ENCODE measurements at regions of chr10 and their contacts with region 1.

Region 1: DNA sequence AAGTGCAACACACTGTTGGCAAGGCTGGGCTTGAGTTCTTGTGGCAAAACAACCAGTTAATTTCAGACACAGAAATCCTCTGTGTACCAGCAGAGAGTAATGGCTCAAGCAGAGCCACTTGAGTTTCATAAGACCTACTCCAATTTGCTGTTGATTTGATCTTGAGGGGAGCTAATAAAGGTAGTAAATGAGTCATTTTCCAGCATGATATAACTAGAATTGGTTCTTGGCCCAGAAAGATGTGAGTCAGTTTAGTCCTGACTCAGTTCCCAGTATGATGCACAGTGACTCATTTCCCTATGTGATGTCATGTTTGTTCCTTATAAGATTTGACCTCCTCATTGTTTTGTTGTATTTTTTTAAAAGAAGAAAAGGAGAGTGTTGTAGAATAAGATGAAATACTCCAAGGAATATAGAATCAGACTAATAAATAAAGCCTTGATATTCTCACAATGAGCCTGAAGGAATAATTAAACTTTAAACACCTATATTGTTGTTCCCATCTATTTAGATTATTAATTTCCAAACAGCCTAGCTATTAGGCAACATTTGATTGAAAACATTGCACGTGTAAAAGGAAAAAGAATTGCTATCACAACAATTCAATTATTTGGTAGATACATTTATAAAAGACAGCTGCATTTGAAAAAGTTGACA is 186.2 kb downstream of the REEP3 start:
- DNase-seq: peak; percentile 58
- H3K4me3 Mint-ChIP-seq: no peak overlapping the region
- H3K27ac Mint-ChIP-seq: peak overlapping the region; percentile 27
- H3K4me1 Mint-ChIP-seq: peaks cover 17% of the 10 kb centered on the region
- H3K27me3 Mint-ChIP-seq: no peaks in the 10 kb centered on the region

Region 2: GRCh38 chr10:61903221-61903927 is 1804.0 kb before region 1 on chr10:
- CTCF ChIA-PET with region 1: no interaction called
- intact Hi-C with region 1: loop called (anchors 10 kb)
- DNase-seq: peak; percentile 74
- H3K4me3 Mint-ChIP-seq: peak overlapping the region; percentile 99
- H3K27ac Mint-ChIP-seq: peak overlapping the region; percentile 100
- H3K4me1 Mint-ChIP-seq: peaks cover 42% of the 10 kb centered on the region
- H3K27me3 Mint-ChIP-seq: no peaks in the 10 kb centered on the region

Region 3: GRCh38 chr10:62637249-62638061 is 1069.9 kb before region 1 on chr10:
- CTCF ChIA-PET with region 1: no interaction called
- intact Hi-C with region 1: loop called (anchors 1 kb)
- DNase-seq: peak; percentile 81
- H3K4me3 Mint-ChIP-seq: no peak overlapping the region
- H3K27ac Mint-ChIP-seq: no peak overlapping the region
- H3K4me1 Mint-ChIP-seq: peaks cover 14% of the 10 kb centered on the region
- H3K27me3 Mint-ChIP-seq: no peaks in the 10 kb centered on the region

Region 4: GRCh38 chr10:62980687-62981086 is 726.7 kb before region 1 on chr10:
- CTCF ChIA-PET with region 1: no interaction called
- intact Hi-C with region 1: loop called (anchors 5 kb)
- DNase-seq: peak; percentile 52
- H3K4me3 Mint-ChIP-seq: no peak overlapping the region
- H3K27ac Mint-ChIP-seq: peak overlapping the region; percentile 76
- H3K4me1 Mint-ChIP-seq: peaks cover 23% of the 10 kb centered on the region
- H3K27me3 Mint-ChIP-seq: peaks cover 8% of the 10 kb centered on the region

Region 5: DNA sequence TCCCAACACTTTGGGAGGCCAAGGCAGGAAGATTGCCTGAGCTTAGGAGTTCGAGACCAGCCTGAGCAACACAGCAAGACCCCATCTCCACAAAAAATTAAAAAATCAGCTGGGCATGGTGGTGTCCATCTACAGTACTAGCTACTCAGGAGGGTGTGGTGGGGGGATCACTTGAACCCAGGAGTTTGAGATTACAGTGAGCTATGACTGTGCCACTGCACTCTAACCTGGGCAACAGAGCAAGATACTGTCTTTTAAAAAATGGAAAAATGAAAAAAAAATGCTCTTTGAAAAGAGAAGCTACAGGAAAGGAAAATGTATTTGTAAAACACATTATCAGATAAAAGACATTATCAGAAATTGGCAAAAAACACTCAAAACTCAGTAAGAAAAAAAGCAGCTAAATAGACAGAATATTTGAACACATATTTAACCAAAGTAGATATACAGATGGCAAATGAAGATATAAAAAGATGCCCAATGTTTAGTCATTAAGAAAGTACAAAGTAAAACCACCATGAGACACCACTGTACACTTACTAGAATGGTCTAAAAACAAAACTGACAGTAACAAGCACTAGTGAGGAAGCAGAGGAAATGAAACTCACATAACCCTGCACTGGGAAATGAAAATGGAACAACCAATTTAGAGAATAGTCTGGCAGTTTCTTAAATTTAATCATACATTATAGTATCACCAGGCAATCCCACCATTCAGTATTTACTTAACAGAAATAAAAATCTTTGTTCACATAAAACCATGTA is 533.7 kb before region 1 on chr10:
- CTCF ChIA-PET with region 1: no interaction called
- intact Hi-C with region 1: loop called (anchors 1 kb)
- DNase-seq: peak; percentile 18
- H3K4me3 Mint-ChIP-seq: no peak overlapping the region
- H3K27ac Mint-ChIP-seq: peak overlapping the region; percentile 71
- H3K4me1 Mint-ChIP-seq: peaks cover 62% of the 10 kb centered on the region
- H3K27me3 Mint-ChIP-seq: no peaks in the 10 kb centered on the region

Region 6: DNA sequence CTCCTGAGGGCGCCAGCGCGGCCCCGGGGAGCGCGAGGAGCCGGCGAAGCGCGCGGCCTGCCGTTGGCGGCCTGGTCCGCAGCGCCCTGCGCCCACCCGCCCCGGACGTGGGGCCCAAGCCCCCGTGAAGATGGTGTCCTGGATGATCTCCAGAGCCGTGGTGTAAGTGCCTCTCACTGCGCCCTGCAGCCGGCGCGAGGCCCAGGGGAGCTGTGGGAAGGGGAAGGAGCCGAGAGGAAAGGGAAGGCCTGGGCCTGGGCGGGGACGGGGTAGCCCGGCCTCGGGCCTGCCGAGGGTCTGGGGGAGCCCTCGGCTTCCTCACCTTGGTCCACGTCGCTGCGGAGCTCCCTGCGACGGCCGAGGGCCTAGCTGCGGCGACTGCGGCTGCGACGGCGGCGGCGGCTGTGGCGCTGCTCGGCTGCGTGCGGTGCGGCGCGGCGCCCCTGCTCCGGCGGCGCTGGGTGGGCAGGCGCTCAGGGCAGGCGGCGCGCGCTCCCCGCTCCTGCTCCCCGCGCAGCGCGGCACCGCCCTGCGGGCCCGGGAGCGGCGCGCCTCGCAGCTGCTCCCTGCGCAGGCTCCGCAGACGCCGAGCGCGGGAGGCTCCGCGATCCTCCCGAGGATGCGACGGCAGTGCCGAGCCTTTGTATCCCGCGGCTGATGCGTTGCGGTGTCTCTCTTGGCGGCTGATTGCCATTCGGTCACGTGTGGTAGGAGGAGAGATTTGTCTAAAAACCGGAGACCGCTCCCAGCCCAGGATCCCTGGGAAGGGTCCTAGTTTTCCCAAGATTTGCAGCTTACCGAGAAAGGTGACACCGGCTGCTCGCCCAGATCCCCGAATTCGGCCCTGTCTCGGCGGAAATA is 185.7 kb before region 1 on chr10:
- CTCF ChIA-PET with region 1: no interaction called
- intact Hi-C with region 1: loop called (anchors 2 kb)
- DNase-seq: peak; percentile 59
- H3K4me3 Mint-ChIP-seq: peak overlapping the region; percentile 84
- H3K27ac Mint-ChIP-seq: peak overlapping the region; percentile 86
- H3K4me1 Mint-ChIP-seq: peaks cover 66% of the 10 kb centered on the region
- H3K27me3 Mint-ChIP-seq: no peaks in the 10 kb centered on the region

Region 7: GRCh38 chr10:63720072-63720537 is 12.7 kb after region 1 on chr10:
- CTCF ChIA-PET with region 1: interaction called, 16 read pairs
- intact Hi-C with region 1: no loop called
- DNase-seq: peak; percentile 67
- H3K4me3 Mint-ChIP-seq: no peak overlapping the region
- H3K27ac Mint-ChIP-seq: no peak overlapping the region
- H3K4me1 Mint-ChIP-seq: peaks cover 10% of the 10 kb centered on the region
- H3K27me3 Mint-ChIP-seq: peaks cover 4% of the 10 kb centered on the region

Region 8: DNA sequence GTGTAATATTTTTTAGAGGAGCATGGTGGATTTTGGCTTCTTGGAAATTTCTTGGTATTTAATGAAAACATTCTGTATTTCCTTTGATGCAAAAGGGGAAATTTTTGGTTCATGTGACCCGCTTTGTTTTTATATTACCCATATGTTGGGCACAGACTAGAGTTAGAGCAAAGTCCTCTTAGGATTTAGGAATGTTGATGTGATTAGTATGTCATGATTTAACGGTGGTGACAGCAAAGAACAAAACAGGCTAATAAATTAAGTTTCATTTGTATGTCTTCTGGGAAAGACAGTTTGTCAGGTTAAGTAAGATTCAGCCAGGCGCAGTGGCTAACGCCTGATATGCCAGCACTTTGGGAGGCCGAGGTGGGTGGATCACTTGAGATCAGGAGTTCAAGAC is 118.4 kb after region 1 on chr10:
- CTCF ChIA-PET with region 1: no interaction called
- intact Hi-C with region 1: no loop called
- DNase-seq: no peak
- H3K4me3 Mint-ChIP-seq: no peak overlapping the region
- H3K27ac Mint-ChIP-seq: no peak overlapping the region
- H3K4me1 Mint-ChIP-seq: no peaks in the 10 kb centered on the region
- H3K27me3 Mint-ChIP-seq: peaks cover 31% of the 10 kb centered on the region